Posterior cingulate gyrus (tissue), 11 donors: ENCODE measurements at regions of chr5 and their contacts with region 1.

Region 1: GRCh38 chr5:55936100-55936693 is 58.6 kb downstream of the IL6ST start:
- DNase-seq: peak; percentile 63 to 97 (median 83)

Region 2: DNA sequence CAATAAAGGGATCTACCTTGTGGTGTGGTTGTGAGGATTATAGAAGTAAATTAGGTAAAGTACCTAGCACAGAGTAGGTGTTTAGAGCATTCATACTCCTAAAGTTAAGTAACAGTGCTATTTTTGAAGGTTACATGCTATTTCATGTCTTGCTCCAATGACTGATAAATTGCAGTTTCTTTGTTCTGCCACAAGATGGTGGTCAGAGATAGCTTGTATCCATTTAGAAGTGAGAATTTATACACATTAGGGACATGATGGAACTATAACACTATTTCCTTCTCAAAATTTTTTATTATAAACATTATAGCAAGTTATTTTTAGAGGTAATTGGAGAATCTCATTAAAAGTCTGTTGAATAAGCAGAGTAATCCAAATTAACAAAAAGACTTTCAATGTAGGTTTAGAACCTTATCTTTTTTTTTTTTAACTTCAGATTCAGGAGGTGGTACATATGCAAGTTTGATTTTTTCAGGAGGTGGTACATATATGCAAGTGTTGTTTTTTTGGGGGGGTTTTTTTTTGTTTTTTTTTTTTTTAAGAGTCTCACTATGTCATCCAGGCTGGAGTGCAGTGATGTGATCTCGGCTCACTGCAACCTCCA is 611.3 kb before region 1 on chr5:
- intact Hi-C with region 1: loop called (anchors 10 kb)
- DNase-seq: no peak

Region 3: GRCh38 chr5:55982957-55983381 is 46.8 kb after region 1 on chr5:
- intact Hi-C with region 1: no loop called
- DNase-seq: no peak

Region 4: GRCh38 chr5:55994574-55995333 is 58.6 kb after region 1 on chr5 and contains the start of gene IL6ST:
- intact Hi-C with region 1: loop called (anchors 5 kb)
- DNase-seq: peak; percentile 95 to 100 (median 98)

Region 5: DNA sequence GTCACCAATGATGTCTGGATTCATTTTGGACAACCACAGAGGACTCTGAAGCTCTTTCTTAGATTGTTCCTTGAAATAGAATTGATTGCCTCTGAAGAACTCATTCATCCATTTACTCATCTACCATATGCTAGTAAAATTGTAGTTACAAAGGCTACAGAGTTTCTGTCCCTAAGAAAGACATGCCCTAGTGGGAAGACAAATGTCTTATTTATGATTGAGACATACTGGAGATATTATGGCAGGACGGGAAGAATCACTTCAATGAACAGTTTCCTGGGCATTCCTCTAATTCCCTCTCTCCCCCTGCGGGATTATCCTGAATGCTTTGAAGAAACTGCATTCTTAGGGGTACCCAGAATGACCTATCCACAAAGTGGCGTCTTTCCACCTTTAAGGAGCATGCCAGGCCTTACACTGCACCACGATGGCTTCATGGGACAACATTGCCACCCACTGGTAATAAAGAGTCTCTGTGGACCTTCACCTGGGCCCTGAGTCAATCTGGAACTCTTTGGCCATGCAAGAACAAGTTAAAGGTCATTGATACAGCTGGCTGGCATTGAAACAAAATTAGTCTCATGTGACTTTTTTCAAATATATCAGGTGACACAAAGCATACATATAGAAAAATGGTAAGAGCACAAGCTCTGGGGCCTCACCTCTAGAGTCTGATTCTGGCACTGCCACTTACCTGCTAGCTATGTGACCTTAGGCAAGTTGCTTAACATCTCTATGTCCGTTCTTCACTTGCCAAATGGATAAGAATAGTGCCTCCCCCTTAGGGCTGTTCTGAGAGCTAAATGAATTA is 264.9 kb after region 1 on chr5:
- intact Hi-C with region 1: loop called (anchors 1 kb)
- DNase-seq: peak in 5 of 10 donors; percentile 17 to 87 (median 40)

Region 6: GRCh38 chr5:56270568-56271392 is 334.6 kb after region 1 on chr5:
- intact Hi-C with region 1: loop called (anchors 2 kb)
- DNase-seq: peak; percentile 54 to 97 (median 80)

Region 7: DNA sequence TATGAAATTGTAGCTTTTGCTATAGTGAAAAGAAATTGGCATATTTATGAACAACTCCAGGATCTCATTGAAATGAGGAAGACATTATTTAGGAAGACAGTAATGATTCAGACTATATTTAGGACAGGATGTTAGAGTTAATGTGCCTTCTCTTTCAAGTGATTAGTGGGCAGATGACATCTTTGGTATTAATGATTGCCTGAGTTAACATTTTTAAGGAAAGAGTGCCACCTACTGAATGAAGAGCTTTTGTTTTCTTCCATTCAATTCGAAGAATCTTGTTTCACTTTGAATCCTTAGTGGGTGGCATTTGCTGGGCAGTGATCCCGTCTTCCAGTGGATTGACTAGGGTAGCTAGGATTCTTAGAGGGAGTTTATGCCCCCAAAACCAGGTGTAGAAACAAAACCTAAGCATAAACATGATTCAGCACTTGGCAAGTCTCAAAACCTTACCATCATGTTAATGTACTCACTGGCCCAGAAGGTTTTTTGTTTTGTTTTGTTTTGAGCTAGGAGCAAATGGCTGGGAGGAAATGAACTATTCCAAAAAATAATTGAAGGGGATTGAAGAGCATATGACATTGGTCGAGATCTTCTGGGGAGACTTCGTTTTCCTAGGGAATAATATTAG is 902.3 kb after region 1 on chr5:
- intact Hi-C with region 1: loop called (anchors 5 kb)
- DNase-seq: no peak